ENCODE measurements at regions of chr18 and their contacts with region 1.

Region 1: DNA sequence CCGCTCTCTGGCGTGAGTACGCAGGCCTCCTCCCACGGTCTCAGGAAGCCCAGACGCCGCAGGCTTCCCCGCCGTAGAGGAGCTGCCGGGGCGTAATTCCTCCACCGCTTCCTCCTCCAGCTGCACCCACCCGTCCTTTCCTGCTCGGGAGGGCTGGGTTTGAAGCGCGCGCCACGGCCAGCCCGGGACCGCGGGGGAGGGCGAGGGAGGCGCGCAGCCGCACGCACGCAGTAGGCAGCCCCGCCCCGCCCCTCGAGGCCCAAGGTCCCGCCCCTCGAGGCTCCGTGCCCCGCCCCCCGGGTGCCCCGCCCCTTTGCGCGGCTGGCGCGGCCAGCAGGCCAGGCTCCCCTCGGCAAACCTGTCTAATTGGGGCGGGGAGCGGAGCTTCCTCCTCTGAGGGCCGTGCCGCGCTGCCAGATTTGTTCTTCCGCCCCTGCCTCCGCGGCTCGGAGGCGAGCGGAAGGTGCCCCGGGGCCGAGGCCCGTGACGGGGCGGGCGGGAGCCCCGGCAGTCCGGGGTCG is at the start of gene MALT1:
- DNase-seq: peak; percentile 94
- ATAC-seq: peak; percentile 86
- H3K4me3 Mint-ChIP-seq: peak within 1 kb of the TSS; percentile 87
- H3K27ac Mint-ChIP-seq: peak within 1 kb of the TSS; percentile 85
- H3K4me1 Mint-ChIP-seq: peaks cover 18% of the 10 kb centered on the region
- H3K27me3 Mint-ChIP-seq: no peaks in the 10 kb centered on the region
- CTCF ChIP-seq: no peak
- total RNA-seq, gene MALT1: 11.2 to 13.6 TPM (median 13.2 TPM) in 3 replicates

Region 2: GRCh38 chr18:58529714-58530354 is 141.3 kb before region 1 on chr18:
- CTCF ChIA-PET with region 1: interaction called, 17 read pairs
- POLR2A ChIA-PET with region 1: interaction called, 3 read pairs
- DNase-seq: peak; percentile 82
- ATAC-seq: peak; percentile 92
- H3K4me3 Mint-ChIP-seq: no peak overlapping the region
- H3K27ac Mint-ChIP-seq: no peak overlapping the region
- H3K4me1 Mint-ChIP-seq: peaks cover 10% of the 10 kb centered on the region
- H3K27me3 Mint-ChIP-seq: no peaks in the 10 kb centered on the region
- CTCF ChIP-seq: peak; percentile 77

Region 3: DNA sequence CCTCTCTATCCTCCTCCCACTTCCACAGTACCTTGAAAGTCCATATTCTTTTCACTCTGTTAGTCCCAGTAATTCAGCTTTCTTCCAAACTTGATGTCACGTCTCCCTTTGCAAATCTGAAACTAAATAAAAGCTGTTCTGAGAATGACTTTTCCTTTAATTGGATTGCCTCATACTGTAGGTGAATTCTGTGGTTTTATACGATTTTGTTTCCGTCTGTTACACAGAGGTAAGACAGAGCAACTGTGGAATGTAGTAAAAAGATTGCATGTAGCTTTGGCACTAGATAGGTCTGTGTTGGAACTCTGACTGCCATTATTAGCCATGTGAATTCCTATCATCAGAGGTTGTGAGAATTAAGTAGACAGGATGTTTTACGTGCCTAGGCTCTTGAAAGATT is 26.0 kb after region 1 on chr18:
- CTCF ChIA-PET with region 1: no interaction called
- POLR2A ChIA-PET with region 1: no interaction called
- DNase-seq: no peak
- ATAC-seq: no peak
- H3K4me3 Mint-ChIP-seq: no peak overlapping the region
- H3K27ac Mint-ChIP-seq: no peak overlapping the region; the same call in 1 of the 2 replicates
- H3K4me1 Mint-ChIP-seq: peaks cover 16% of the 10 kb centered on the region
- H3K27me3 Mint-ChIP-seq: no peaks in the 10 kb centered on the region
- CTCF ChIP-seq: no peak

Measured in WTC11 (cell line).